Activated CD4-positive, alpha-beta memory T cell treated with anti-CD3 and anti-CD28 coated beads, Interleukin-2, amount 10 ng/mL, durations not matched to agents 7 days and 5 days (primary cell): ENCODE measurements at regions of chr17 and their contacts with region 1.

Region 1: GRCh38 chr17:43125133-43125966 is at the start of gene BRCA1:
- DNase-seq: peak; percentile 96
- H3K4me3 Mint-ChIP-seq: peak within 1 kb of the TSS; percentile 100
- H3K27ac Mint-ChIP-seq: peak within 1 kb of the TSS; percentile 91
- H3K4me1 Mint-ChIP-seq: peaks cover 38% of the 10 kb centered on the region
- H3K27me3 Mint-ChIP-seq: no peaks in the 10 kb centered on the region
- total RNA-seq, gene BRCA1: 62.5 to 66.5 TPM

Region 2: GRCh38 chr17:42918902-42919521 is 206.3 kb before region 1 on chr17:
- CTCF ChIA-PET with region 1: no interaction called
- POLR2A ChIA-PET with region 1: no interaction called
- DNase-seq: no peak
- H3K4me3 Mint-ChIP-seq: no peak overlapping the region
- H3K27ac Mint-ChIP-seq: no peak overlapping the region
- H3K4me1 Mint-ChIP-seq: peaks cover 2% of the 10 kb centered on the region
- H3K27me3 Mint-ChIP-seq: peaks cover 28% of the 10 kb centered on the region

Region 3: GRCh38 chr17:43085474-43085873 is 39.9 kb before region 1 on chr17:
- CTCF ChIA-PET with region 1: no interaction called
- POLR2A ChIA-PET with region 1: no interaction called
- DNase-seq: no peak
- H3K4me3 Mint-ChIP-seq: no peak overlapping the region
- H3K27ac Mint-ChIP-seq: no peak overlapping the region
- H3K4me1 Mint-ChIP-seq: no peaks in the 10 kb centered on the region
- H3K27me3 Mint-ChIP-seq: no peaks in the 10 kb centered on the region

Region 4: DNA sequence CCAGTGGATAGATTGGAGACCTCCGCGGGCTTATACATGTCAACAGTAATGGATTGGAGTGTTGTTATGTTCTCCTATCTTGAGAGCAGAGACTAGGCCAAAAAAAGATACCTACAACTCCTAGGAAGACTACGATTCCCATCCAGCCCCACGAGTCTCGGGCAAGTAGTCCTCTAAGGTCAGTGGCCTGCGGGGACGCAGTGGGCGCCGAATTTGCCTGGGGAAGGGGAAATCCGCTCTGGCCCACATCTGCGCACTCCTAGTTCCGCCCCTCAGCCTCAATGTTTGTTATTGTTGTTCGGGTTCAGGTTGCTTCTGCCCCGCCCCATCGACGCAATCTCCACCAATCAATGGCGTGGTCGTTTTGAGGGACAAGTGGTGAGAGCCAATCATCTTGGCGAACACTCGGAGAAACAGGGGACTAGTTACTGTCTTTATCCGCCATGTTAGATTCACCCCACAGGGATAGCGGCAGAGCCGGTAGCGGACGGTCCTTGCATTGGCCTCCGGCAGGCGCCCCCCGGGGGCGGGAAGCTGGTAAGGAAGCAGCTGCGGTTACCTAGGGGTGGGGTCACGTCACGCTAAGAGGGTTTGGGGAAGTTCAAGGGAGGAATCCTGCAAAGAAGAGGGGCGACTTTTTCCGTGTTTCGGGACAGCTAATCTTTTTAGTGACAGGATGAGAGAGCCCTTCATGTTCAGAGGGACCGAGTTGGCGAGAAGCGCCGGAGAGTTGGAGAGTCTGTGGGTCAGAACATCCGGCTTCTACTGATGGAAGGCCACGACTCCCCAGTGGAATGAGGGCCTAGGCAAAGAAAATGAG is 45.6 kb after region 1 on chr17 and contains the start of gene NBR1:
- CTCF ChIA-PET with region 1: interaction called, 8 read pairs
- POLR2A ChIA-PET with region 1: interaction called, 105 read pairs
- DNase-seq: peak; percentile 98
- H3K4me3 Mint-ChIP-seq: no peak within 1 kb of the TSS
- H3K27ac Mint-ChIP-seq: no peak within 1 kb of the TSS
- H3K4me1 Mint-ChIP-seq: peaks cover 39% of the 10 kb centered on the region
- H3K27me3 Mint-ChIP-seq: no peaks in the 10 kb centered on the region
- total RNA-seq, gene NBR1: 68.1 to 69.8 TPM